Aorta (tissue), 5 donors: ENCODE measurements at regions of chr9 and their contacts with region 1.

Region 1: DNA sequence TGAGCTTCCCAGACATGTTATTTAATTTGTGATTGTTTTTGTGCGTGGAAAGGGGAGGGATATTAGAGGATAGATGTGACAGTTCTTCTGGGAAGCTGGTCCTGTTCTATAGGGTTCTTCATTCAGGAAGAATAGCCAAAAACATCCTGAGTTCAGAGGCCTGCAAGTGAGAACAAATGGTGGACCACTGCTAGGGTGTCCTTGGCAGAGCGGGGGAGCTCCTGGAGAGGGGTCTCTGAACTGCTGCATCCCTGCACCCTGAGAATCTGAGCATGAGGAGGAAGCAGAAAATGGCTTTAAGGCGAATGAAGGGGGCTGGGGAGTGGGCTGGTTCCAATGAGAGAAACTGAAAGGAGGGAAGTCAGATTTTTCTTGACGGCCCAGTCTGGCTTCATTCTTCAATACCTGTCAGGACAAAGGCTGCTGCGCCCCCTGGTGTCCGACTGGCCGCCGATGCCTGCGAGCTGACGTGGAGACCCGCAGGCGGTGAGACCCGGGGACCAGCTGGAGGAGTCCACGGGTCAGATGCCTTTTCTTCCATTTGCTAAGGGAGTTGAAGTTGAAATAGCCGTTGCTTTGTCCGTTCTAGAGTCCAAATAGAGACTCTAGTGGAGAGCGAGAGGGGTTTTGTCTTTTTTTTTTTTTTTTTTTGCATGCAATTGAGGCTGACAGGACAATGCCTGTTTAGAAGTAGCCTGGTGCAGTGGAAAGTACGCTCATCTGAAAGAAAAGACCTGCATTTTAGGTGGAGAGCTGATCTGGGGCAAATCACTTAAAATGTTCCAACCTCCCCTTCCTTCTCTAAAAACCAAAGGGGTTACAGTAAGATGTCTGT is 39.5 kb upstream of the NFIB start:
- DNase-seq: peak; percentile 95 to 99
- ATAC-seq: peak; percentile 83
- H3K4me3 ChIP-seq: peak overlapping the region in 1 of 2 donors; percentile 5
- H3K27ac ChIP-seq: peak overlapping the region; percentile 6 to 65
- H3K4me1 ChIP-seq: peaks cover 4% of the 10 kb centered on the region in 2 donors
- H3K27me3 ChIP-seq: no peaks in the 10 kb centered on the region

Region 2: GRCh38 chr9:13568841-13569601 is 784.4 kb before region 1 on chr9:
- intact Hi-C with region 1: loop called in 1 of 2 experiments (anchors 10 kb)
- DNase-seq: no peak
- ATAC-seq: peak; percentile 10
- H3K4me3 ChIP-seq: peak overlapping the region in 1 of 2 donors; percentile 36
- H3K27ac ChIP-seq: peak overlapping the region; percentile 87 to 93
- H3K4me1 ChIP-seq: peaks cover 3 to 5% of the 10 kb centered on the region in 2 donors
- H3K27me3 ChIP-seq: no peaks in the 10 kb centered on the region

Region 3: DNA sequence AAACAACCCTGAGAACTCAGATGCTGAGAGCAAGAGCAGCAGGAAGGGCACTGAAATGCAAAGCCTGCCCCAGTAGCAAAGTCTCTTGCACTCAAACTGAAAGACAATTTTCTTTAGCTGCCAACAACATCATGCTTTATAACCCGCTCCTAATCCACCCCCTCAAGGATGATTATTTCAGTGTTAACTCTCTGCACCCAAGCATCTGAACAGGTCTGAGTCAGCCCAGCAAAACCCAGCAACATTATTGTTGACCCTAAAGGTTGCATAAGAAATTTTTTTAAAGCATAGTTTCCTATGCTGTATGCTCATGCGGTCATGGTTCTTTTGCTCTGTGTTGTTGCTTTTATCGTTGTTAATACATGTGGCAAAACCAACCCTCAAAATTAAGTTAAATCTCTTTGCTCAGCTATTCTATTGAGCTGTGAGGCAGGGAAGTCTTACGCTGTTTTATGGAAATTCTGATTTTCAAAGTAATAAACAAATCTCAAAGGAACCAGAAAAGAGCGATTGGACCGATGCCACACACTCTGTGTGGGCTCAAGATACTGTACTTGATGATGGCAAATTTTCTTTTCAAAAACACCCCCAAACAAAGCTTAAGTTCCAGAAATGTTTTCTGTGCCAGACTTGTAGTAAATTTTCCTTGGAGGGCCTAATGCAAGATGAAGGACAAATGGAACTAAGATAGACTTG is 633.3 kb before region 1 on chr9:
- intact Hi-C with region 1: loop called in 1 of 2 experiments (anchors 10 kb)
- DNase-seq: no peak
- ATAC-seq: peak; percentile 59
- H3K4me3 ChIP-seq: no peak overlapping the region
- H3K27ac ChIP-seq: no peak overlapping the region
- H3K4me1 ChIP-seq: peaks cover 2 to 4% of the 10 kb centered on the region in 2 donors
- H3K27me3 ChIP-seq: no peaks in the 10 kb centered on the region

Region 4: GRCh38 chr9:14096258-14096922 is 257.0 kb before region 1 on chr9:
- intact Hi-C with region 1: loop called in 1 of 2 experiments (anchors 10 kb)
- DNase-seq: no peak
- ATAC-seq: peak; percentile 86
- H3K4me3 ChIP-seq: peak overlapping the region; percentile 12 to 15
- H3K27ac ChIP-seq: peak overlapping the region; percentile 55 to 87
- H3K4me1 ChIP-seq: peaks cover 0 to 3% of the 10 kb centered on the region in 2 donors
- H3K27me3 ChIP-seq: no peaks in the 10 kb centered on the region

Region 5: DNA sequence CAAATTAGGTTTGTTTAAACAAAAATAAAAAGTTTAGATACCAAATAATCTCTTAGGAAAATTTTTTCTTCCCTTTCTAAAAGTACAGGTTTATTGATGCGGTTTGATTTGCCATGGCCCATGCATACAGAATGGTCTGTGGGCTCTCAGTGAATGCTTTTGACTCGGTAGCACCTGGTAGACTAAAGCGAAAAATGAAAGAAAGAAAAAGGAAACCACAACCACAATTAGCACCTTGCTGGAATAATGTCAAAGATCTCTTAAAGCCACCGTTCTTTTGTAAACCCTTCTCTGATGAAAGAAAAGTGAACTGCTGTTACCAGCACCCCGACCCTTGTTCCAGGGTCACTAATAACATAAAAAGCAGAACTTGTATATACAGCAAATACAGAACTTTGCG is 197.4 kb before region 1 on chr9:
- intact Hi-C with region 1: no loop called
- DNase-seq: no peak
- ATAC-seq: no peak
- H3K4me3 ChIP-seq: no peak overlapping the region
- H3K27ac ChIP-seq: no peak overlapping the region
- H3K4me1 ChIP-seq: peaks cover 4 to 7% of the 10 kb centered on the region in 2 donors
- H3K27me3 ChIP-seq: no peaks in the 10 kb centered on the region